ENCODE measurements at regions of chr1 and their contacts with region 1.

Region 1: DNA sequence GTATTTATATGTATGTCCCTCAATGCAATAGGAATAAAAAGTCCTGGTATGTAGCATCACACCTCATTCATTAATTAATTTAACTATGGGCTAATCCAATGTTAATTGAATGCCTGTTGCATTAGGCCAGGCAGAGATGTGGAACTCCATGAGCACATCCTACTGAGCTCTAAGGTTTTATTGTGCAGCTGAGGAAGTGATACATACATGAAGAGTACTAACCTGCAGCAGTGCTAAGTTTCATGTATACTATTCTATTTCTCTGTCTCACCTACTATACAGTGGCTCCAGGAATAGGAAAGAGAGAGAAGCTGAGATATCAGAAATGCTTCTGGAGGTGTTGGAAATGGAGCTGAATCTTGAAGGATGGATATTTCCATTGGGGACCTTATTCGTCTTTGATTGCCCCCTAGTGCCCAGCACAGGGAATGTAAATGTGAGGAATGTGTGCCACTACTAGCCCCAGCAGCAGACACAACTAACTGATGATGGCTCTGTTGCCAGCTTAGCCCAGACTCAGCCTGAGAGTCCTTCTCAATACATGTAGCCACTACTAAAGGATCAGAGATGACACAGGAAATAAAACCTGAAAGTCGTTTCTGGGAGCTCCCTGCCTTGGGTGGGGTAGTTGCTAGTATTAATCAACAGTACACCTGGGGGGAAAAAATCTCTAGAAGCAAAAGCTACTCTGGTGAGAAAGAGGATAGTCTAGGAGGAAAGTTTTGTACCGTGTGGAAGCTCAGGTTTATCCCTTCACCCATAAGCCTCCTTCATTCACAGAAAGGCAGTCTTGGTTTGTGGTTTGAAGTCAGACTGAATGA is 173.3 kb upstream of the FOXD3 start:
- DNase-seq: peak; percentile 40
- ATAC-seq: peak; percentile 97
- H3K4me3 ChIP-seq: no peak overlapping the region
- H3K27ac ChIP-seq: no peak overlapping the region
- H3K4me1 ChIP-seq: no peaks in the 10 kb centered on the region
- H3K27me3 ChIP-seq: peaks cover 45% of the 10 kb centered on the region
- CTCF ChIP-seq: peak; percentile 48 to 79 (median 79); a peak in 5 of 6 replicates
- POLR2A ChIP-seq: no peak
- RAD21 ChIP-seq: peak; percentile 65

Region 2: GRCh38 chr1:63127376-63127775 is 21.7 kb before region 1 on chr1:
- CTCF ChIA-PET with region 1: interaction called, 11 read pairs
- POLR2A ChIA-PET with region 1: no interaction called
- RAD21 ChIA-PET with region 1: no interaction called
- intact Hi-C with region 1: no loop called
- DNase-seq: no peak
- ATAC-seq: no peak
- H3K4me3 ChIP-seq: no peak overlapping the region
- H3K27ac ChIP-seq: no peak overlapping the region
- H3K4me1 ChIP-seq: no peaks in the 10 kb centered on the region
- H3K27me3 ChIP-seq: peaks cover 43% of the 10 kb centered on the region
- CTCF ChIP-seq: no peak
- POLR2A ChIP-seq: no peak
- RAD21 ChIP-seq: no peak